PC-3 (cell line): ENCODE measurements at regions of chr12 and their contacts with region 1.

Region 1: DNA sequence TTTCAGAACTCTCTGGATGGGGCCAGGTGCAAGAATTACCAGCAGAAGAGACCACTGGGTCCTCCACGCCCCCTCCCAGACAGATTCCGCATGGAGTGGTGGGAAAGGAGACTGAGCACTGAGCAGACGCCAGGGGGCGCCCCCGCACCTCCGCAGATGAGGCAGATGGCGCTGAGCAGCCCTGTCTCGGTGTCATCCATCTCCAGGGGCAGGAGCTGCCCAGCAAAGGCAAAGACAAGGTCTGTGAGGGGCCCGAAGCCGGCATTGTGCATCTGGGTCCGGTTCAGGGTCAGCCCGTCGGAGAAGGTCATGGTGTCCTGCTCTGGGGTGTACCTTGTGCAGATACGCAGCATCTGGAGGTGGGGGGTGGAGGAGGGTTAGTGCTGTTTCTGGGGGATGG is 6.3 kb upstream of the ITGB7 start:
- DNase-seq: peak; percentile 76
- ATAC-seq: peak; percentile 84
- H3K4me3 ChIP-seq: no peak overlapping the region
- H3K27ac ChIP-seq: no peak overlapping the region
- H3K4me1 ChIP-seq: peaks cover 24% of the 10 kb centered on the region
- H3K27me3 ChIP-seq: no peaks in the 10 kb centered on the region
- CTCF ChIP-seq: peak; percentile 95

Region 2: GRCh38 chr12:53251477-53252348 is 38.4 kb after region 1 on chr12:
- CTCF ChIA-PET with region 1: interaction called, 10 read pairs
- POLR2A ChIA-PET with region 1: no interaction called
- intact Hi-C with region 1: loop called (anchors 2 kb)
- DNase-seq: peak; percentile 80
- ATAC-seq: peak; percentile 83
- H3K4me3 ChIP-seq: peak overlapping the region; percentile 99
- H3K27ac ChIP-seq: peak overlapping the region; percentile 84
- H3K4me1 ChIP-seq: peaks cover 19% of the 10 kb centered on the region
- H3K27me3 ChIP-seq: no peaks in the 10 kb centered on the region
- CTCF ChIP-seq: peak; percentile 52

Region 3: DNA sequence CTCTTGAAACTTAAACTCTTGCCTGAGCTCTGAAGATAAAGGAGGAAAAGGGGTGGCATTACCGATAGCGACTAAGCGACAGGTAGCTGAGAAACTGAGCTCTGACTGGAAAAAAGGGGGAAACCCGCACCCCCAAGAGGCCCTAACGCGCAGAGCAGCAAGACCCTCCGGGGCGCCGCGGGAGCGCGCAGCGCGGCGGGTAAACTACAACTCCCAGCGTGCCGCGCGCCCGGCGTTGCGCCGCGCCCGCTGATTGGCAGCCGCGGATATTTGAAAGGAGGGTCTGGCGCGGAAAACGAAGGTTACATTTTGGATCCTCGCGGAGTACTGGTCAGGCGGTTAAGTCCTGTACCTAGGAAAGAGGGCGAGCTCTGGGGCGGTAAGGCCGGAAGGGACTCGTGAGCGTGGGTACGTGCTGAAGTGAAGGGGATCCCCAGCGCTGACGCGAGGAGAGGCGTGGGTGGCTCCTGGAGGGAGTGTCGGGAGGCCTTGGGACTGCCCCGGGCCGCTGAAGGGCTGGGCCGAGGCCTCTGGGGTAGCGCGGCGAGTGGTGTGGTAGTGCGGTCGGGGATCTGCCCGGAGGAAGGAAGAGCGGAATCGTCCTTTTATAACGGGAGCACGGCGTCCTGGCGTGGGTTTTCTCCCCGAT is 54.8 kb after region 1 on chr12 and contains the start of gene ESPL1:
- CTCF ChIA-PET with region 1: interaction called, 4 read pairs
- POLR2A ChIA-PET with region 1: no interaction called
- intact Hi-C with region 1: loop called (anchors 1 kb)
- DNase-seq: peak; percentile 71
- ATAC-seq: peak; percentile 88
- H3K4me3 ChIP-seq: peak within 1 kb of the TSS; percentile 82
- H3K27ac ChIP-seq: peak within 1 kb of the TSS; percentile 44
- H3K4me1 ChIP-seq: peaks cover 28% of the 10 kb centered on the region
- H3K27me3 ChIP-seq: no peaks in the 10 kb centered on the region
- CTCF ChIP-seq: 0 out of 2 replicates have a peak, but pooled peaks have one; percentile 19
- total RNA-seq, gene ESPL1: 31.6 and 37.3 TPM in 2 replicates

Region 4: DNA sequence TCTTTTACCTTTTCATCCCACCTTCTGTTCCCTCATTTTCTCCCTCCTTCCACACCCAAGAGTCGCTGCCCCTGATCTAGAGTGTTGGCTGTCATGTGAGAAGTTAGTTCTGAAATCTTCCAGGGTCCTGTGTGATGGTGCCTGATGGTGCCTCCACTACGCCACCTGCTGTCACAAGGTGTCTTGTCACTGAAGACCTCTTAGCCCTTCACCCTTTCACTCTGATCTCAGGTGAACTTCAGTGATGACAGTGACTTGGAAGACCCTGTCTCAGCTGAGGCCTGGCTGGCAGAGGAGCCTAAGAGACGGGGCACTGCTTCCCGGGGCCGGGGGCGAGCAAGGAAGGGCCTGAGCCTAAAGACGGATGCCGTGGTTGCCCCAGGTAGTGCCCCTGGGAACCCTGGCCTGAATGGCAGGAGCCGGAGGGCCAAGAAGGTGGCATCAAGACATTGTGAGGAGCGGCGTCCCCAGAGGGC is 74.4 kb after region 1 on chr12:
- CTCF ChIA-PET with region 1: interaction called, 13 read pairs
- POLR2A ChIA-PET with region 1: no interaction called
- intact Hi-C with region 1: loop called (anchors 1 kb)
- DNase-seq: peak; percentile 68
- ATAC-seq: peak; percentile 61
- H3K4me3 ChIP-seq: no peak overlapping the region
- H3K27ac ChIP-seq: no peak overlapping the region
- H3K4me1 ChIP-seq: peaks cover 29% of the 10 kb centered on the region
- H3K27me3 ChIP-seq: no peaks in the 10 kb centered on the region
- CTCF ChIP-seq: peak; percentile 90

Region 5: GRCh38 chr12:53344824-53345485 is 131.6 kb after region 1 on chr12:
- CTCF ChIA-PET with region 1: interaction called, 10 read pairs
- POLR2A ChIA-PET with region 1: no interaction called
- intact Hi-C with region 1: no loop called
- DNase-seq: peak; percentile 59
- ATAC-seq: peak; percentile 85
- H3K4me3 ChIP-seq: peak overlapping the region; percentile 76
- H3K27ac ChIP-seq: no peak overlapping the region
- H3K4me1 ChIP-seq: peaks cover 3% of the 10 kb centered on the region; the same call in 1 of the 2 replicates
- H3K27me3 ChIP-seq: no peaks in the 10 kb centered on the region
- CTCF ChIP-seq: peak; percentile 79